Endothelial cell of umbilical vein (primary cell): ENCODE measurements at regions of chr16 and their contacts with region 1.

Region 1: DNA sequence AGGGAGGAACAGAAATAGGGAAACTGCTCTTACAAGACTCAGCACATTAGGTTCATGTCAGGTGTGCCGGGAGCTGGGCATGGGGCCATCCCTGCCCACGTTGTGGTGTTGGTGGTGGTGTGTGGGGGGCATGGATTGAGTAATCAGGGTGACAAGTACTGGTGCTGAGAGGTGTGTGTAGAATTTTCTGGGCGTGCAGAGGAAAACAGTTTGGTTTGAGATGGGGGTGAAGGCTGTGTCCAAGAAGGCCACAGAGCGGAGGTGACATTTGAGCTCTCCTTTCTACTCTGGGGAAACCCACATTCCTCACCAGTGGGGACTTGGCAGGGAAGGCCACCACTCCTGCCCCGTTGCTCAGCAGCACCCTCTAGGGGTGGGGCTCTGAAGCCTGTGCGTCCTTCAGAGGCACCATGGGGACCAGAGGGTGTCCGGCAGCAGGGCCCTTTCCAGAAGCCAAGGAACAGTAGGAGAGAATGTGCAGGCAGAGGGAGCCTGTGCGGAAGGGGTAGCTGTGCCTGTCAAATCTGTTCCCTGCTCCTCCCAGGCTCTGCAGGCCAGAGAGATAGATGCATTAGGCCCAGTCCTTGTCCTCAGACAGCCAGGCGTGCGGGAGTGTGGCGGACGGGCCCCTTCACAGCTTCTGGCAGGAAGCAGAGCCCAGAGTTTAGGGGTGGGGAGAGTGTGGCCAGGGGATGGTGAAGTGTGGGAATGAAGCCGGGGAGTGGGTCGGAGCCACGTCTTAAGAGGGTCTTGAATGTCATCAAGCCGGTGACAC is 48.7 kb upstream of the GSE1 start:
- DNase-seq: no peak
- H3K4me3 ChIP-seq: no peak overlapping the region
- H3K27ac ChIP-seq: no peak overlapping the region
- H3K4me1 ChIP-seq: peaks cover 14% of the 10 kb centered on the region
- H3K27me3 ChIP-seq: no peaks in the 10 kb centered on the region
- CTCF ChIP-seq: peak; percentile 47 to 48
- POLR2A ChIP-seq: no peak

Region 2: GRCh38 chr16:85528528-85529387 is 35.7 kb before region 1 on chr16:
- CTCF ChIA-PET with region 1: interaction called, 11 read pairs
- POLR2A ChIA-PET with region 1: no interaction called
- dilution Hi-C with region 1: no loop called
- intact Hi-C with region 1: no loop called
- DNase-seq: no peak
- H3K4me3 ChIP-seq: no peak overlapping the region
- H3K27ac ChIP-seq: no peak overlapping the region
- H3K4me1 ChIP-seq: no peaks in the 10 kb centered on the region
- H3K27me3 ChIP-seq: no peaks in the 10 kb centered on the region
- CTCF ChIP-seq: peak; percentile 39 to 49
- POLR2A ChIP-seq: no peak

Region 3: DNA sequence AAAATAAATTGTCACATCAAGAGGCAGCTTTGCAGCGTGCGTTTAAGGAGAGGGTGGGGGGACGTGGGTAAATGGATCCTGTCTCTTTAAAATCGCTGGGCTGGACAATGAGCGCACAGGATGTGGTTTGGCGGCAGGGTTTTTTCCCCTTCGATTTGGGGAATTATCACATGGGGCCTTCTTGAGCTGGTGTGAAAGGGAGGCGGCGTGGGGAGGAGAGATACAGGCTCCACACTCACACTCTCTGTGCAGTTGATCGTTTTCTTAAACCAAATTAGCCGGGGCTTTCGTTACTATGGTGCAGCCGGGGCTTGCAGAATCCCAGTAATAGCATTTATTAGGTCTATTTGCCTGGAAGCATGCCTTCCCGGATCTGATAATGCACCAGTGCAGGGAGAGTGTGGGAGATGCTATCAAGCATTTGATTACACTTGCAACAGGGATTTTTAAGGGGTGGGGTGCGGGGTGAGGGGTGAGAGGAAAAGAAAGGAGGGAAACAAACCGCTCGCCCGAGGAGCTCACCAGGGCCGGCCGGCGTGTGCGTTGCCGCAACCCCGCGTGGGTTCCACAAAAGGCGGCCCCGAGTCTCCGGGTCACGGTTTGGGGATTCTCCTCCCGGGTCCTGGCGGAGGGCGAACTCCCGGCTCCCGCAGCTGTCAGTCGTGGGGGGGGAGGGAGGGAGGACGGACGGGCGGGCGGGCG is 10.2 kb before region 1 on chr16:
- CTCF ChIA-PET with region 1: interaction called, 30 read pairs
- POLR2A ChIA-PET with region 1: no interaction called
- dilution Hi-C with region 1: no loop called
- intact Hi-C with region 1: loop called (anchors 1 kb)
- DNase-seq: peak; percentile 45
- H3K4me3 ChIP-seq: peak overlapping the region; percentile 29 to 48 (median 39)
- H3K27ac ChIP-seq: peak overlapping the region; percentile 3
- H3K4me1 ChIP-seq: peaks cover 18% of the 10 kb centered on the region
- H3K27me3 ChIP-seq: no peaks in the 10 kb centered on the region
- CTCF ChIP-seq: no peak
- POLR2A ChIP-seq: no peak